Activated T-helper 1 cell treated with anti-CD3 and anti-CD28 coated beads, Interleukin-12 subunit alpha, Interleukin-12 subunit beta, Interleukin-2, Interleukin-4 antibody, amounts not matched to agents 30 ng/mL and 10 ng/mL and 1 ng/mL, durations not matched to agents 14 hours and 24 hours and 36 hours (primary cell): ENCODE measurements at regions of chr1 and their contacts with region 1.

Region 1: GRCh38 chr1:235697508-235697907 is 47.9 kb upstream of the GNG4 start:
- DNase-seq: no peak
- H3K4me3 Mint-ChIP-seq: no peak overlapping the region
- H3K27ac Mint-ChIP-seq: peak overlapping the region; percentile 91
- H3K4me1 Mint-ChIP-seq: peaks cover 20% of the 10 kb centered on the region
- H3K27me3 Mint-ChIP-seq: no peaks in the 10 kb centered on the region

Region 2: DNA sequence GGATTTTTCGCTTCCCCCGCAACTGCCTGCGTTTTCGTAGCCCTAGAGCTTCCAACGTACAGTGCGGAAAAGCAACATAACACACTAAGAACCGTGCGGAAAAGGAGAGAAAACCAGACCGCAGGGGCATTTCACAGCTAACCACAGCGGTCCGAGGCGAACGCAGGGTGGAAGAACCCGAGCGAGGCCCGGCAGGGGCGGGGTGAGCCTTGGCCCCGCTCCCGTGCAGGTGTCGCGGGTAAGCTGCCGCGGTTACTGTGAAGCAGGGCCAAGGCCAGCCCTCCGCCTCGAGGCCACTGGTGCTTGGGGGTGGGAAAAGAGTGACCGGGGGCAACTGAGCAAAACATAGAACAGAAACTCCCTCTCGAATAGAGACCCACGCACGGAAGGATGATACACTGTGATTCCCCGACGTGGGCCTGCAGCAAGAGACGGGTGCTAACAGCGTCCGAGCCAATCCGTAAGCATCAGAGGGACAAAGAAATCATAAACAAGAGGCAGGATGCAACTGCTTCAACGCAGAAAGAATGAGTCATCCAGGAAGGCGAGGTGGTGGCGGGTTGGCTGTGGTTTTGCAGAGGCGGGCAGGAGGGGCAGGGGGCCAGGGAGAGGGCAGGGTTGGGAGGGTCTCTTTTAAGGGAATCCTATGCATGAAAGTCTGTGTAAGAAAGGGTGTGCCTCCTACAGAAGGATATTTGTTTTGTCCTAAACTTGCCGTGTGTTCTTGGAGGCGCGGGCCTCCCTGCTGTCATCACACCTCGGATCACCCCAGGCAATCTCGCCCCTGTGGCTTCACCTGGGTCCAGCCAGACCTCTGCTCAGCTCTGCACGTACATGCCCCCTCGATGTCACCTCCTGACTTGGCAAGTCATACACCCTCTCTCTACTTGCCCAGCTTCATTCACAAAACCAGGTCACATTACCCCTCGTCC is 55.2 kb before region 1 on chr1:
- intact Hi-C with region 1: loop called (anchors 1 kb)
- DNase-seq: peak; percentile 76
- H3K4me3 Mint-ChIP-seq: peak overlapping the region; percentile 67
- H3K27ac Mint-ChIP-seq: peak overlapping the region; percentile 92
- H3K4me1 Mint-ChIP-seq: peaks cover 71% of the 10 kb centered on the region
- H3K27me3 Mint-ChIP-seq: peaks cover 17% of the 10 kb centered on the region

Region 3: DNA sequence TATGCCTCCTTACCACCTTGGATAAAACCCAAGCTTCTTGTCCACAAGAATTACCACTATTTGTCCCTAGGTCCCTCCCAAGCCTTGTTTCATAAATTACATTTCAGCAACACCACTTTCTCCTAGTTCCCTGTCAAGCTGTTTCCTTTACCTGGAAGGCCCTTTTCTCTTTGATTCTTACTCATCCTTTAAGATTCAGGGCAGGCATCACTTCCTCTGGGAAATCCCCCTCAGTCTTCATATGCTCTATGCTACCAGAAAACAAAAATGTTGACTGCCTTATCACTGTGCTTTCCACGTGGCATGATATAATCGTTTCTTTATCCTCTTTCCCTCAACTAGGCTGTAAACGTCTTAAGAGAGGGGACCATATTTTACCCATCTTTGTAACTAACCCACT is 66.5 kb after region 1 on chr1:
- intact Hi-C with region 1: loop called (anchors 1 kb)
- DNase-seq: peak; percentile 16
- H3K4me3 Mint-ChIP-seq: no peak overlapping the region
- H3K27ac Mint-ChIP-seq: no peak overlapping the region
- H3K4me1 Mint-ChIP-seq: peaks cover 14% of the 10 kb centered on the region
- H3K27me3 Mint-ChIP-seq: no peaks in the 10 kb centered on the region

Region 4: GRCh38 chr1:235776396-235776795 is 78.9 kb after region 1 on chr1:
- intact Hi-C with region 1: no loop called
- DNase-seq: no peak
- H3K4me3 Mint-ChIP-seq: no peak overlapping the region
- H3K27ac Mint-ChIP-seq: no peak overlapping the region
- H3K4me1 Mint-ChIP-seq: no peaks in the 10 kb centered on the region
- H3K27me3 Mint-ChIP-seq: no peaks in the 10 kb centered on the region

Region 5: DNA sequence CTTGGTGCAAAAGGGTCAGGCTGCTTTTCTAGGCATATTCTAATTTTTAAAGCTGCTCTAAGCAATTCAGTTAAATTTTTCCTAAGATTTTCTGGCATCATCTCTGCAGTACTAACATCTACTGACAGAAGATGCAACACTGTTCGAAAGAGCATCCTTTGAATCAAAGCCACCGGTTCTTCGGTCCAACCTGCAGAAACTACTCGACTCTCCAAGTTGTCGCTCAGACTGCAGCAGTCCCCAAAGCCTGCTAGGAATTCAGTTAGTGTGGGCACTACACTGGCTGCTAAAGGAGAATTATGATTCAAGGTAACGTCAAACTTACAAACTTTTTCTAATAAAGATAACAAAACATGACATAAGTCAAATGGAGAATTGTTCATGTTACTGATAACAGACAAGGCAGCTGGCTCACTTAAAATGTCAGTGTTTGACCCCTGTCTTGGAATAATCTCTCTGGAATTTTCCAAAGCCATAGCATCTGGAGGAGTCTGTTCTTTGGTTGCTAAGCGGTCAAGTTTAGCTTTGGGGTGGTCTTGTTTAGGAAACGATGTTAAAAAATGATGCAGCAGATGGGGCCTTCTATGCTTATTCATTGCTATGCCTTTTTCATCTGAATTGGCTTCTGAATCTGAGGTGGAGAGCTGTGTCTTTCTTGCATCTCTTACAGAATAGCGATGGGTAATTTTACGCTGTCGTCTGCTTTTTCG is 112.3 kb after region 1 on chr1:
- intact Hi-C with region 1: no loop called
- DNase-seq: no peak
- H3K4me3 Mint-ChIP-seq: no peak overlapping the region
- H3K27ac Mint-ChIP-seq: no peak overlapping the region
- H3K4me1 Mint-ChIP-seq: no peaks in the 10 kb centered on the region
- H3K27me3 Mint-ChIP-seq: no peaks in the 10 kb centered on the region

Region 6: GRCh38 chr1:235878082-235878811 is 180.7 kb after region 1 on chr1:
- intact Hi-C with region 1: no loop called
- DNase-seq: no peak
- H3K4me3 Mint-ChIP-seq: no peak overlapping the region
- H3K27ac Mint-ChIP-seq: peak overlapping the region; percentile 98
- H3K4me1 Mint-ChIP-seq: peaks cover 92% of the 10 kb centered on the region
- H3K27me3 Mint-ChIP-seq: no peaks in the 10 kb centered on the region